ENCODE measurements at regions of chr6 and their contacts with region 1.

Region 1: DNA sequence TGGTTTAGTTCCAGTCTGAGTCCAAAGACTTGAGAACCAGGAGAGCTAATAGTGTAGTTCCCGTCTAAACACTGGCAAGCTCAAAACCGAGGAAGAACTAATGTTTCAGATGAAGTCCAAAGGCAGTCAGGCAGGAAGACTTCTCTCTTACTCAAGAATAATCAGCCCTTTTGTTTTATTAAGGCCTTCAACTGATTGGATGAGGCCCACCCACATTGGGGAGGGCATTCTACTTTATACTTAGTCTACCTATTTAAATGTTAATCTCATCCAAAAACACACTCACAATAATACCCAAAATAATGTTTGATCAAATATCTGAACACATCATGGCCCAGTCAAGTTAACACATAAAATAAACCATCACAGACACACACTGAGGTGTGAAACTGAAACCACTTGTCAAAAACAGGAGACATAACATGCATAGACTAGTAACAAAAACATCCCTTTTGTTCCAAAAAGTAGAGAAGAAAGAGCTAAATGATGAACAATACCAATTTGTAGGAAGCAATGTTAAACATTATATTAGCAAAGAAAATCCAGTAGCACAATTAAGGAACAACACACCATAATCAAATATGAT is 50.2 kb upstream of the SENP6 start:
- DNase-seq: no peak
- ATAC-seq: no peak
- H3K4me3 ChIP-seq: no peak overlapping the region
- H3K4me3 Mint-ChIP-seq: no peak overlapping the region
- H3K27ac ChIP-seq: no peak overlapping the region
- H3K27ac Mint-ChIP-seq: no peak overlapping the region
- H3K4me1 ChIP-seq: no peaks in the 10 kb centered on the region
- H3K4me1 Mint-ChIP-seq: no peaks in the 10 kb centered on the region
- H3K27me3 ChIP-seq: no peaks in the 10 kb centered on the region
- H3K27me3 Mint-ChIP-seq: no peaks in the 10 kb centered on the region
- CTCF ChIP-seq: no peak

Region 2: GRCh38 chr6:74912234-74912633 is 639.2 kb before region 1 on chr6:
- CTCF ChIA-PET with region 1: no interaction called
- POLR2A ChIA-PET with region 1: no interaction called
- intact Hi-C with region 1: no loop called
- DNase-seq: no peak
- ATAC-seq: no peak
- H3K4me3 ChIP-seq: no peak overlapping the region
- H3K4me3 Mint-ChIP-seq: no peak overlapping the region
- H3K27ac ChIP-seq: no peak overlapping the region
- H3K27ac Mint-ChIP-seq: no peak overlapping the region
- H3K4me1 ChIP-seq: no peaks in the 10 kb centered on the region
- H3K4me1 Mint-ChIP-seq: no peaks in the 10 kb centered on the region
- H3K27me3 ChIP-seq: no peaks in the 10 kb centered on the region
- H3K27me3 Mint-ChIP-seq: no peaks in the 10 kb centered on the region
- CTCF ChIP-seq: no peak

Region 3: DNA sequence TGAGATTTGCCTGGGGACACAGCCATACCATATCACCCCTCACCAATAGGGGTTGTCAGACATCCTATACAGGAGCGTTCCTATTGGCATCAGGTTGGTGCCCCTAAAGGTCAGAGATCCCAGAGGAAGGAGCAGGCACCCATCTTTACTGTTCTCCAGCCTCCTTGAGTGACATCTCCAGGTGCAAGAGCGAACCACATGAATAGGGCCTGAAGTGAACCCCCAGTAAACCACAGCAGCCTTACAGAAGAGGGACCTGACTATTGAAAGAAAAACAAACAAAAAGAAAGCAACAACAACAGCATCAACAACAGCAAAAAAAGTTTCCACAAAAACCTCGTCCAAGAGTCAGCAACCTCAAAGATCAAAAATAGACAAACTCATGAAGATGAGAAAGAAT is 17.5 kb after region 1 on chr6:
- CTCF ChIA-PET with region 1: interaction called, 3 read pairs
- POLR2A ChIA-PET with region 1: interaction called, 10 read pairs
- intact Hi-C with region 1: no loop called
- DNase-seq: no peak
- ATAC-seq: no peak
- H3K4me3 ChIP-seq: no peak overlapping the region
- H3K4me3 Mint-ChIP-seq: no peak overlapping the region
- H3K27ac ChIP-seq: no peak overlapping the region
- H3K27ac Mint-ChIP-seq: no peak overlapping the region
- H3K4me1 ChIP-seq: no peaks in the 10 kb centered on the region
- H3K4me1 Mint-ChIP-seq: no peaks in the 10 kb centered on the region
- H3K27me3 ChIP-seq: peaks cover 0 to 14% (median 7%) of the 10 kb centered on the region in 4 experiments
- H3K27me3 Mint-ChIP-seq: peaks cover 44% of the 10 kb centered on the region
- CTCF ChIP-seq: no peak

Region 4: DNA sequence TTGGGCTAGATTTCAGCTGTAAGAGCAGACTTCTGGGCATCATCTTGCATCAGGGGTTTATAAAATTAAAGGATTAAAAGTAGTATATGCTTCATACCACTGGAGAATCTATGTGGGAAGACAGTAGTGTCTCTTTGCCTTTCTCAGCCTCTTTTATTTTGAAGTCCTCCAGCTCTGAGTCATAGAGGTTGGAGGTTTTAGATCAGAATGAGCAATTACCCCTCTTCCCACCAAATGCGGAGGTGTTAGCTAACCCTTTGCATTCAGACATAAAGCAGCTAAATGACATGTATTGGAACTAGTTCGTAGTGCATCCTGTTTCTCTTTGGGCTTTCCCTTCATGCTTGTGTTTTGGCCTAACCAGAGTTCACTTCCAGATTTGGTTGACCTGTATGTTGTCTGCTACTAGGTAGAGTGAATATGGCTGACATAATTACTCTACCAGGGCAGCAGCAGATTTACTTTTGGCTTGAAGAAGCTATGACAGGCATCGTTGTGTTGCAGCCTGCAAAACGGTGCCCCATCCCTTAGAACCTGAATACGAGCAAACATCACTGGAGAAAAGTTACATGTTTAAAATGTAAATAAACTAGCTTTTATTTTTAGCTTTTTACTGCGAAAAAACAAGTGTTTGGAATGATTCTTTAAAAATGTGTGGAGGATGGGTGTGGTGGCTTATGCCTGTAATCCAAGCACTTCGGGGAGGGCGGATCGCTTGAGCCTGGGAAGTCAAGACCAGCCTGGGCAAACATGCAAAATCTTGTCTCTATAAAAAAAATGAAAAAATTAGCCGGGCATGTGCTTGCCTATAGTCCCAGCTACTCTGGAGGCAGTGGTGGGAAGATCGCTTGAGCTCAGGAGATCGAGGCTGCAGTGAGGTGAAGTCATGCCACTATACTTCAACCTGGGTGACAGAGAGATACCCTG is 279.8 kb after region 1 on chr6:
- CTCF ChIA-PET with region 1: no interaction called
- POLR2A ChIA-PET with region 1: no interaction called
- intact Hi-C with region 1: no loop called
- DNase-seq: no peak
- ATAC-seq: no peak
- H3K4me3 ChIP-seq: no peak overlapping the region
- H3K4me3 Mint-ChIP-seq: no peak overlapping the region
- H3K27ac ChIP-seq: no peak overlapping the region
- H3K27ac Mint-ChIP-seq: no peak overlapping the region
- H3K4me1 ChIP-seq: no peaks in the 10 kb centered on the region
- H3K4me1 Mint-ChIP-seq: no peaks in the 10 kb centered on the region
- H3K27me3 ChIP-seq: peaks cover 0 to 5% (median 1%) of the 10 kb centered on the region in 4 experiments
- H3K27me3 Mint-ChIP-seq: no peaks in the 10 kb centered on the region
- CTCF ChIP-seq: no peak

Measured in B cell (primary cell).